BJ (cell line): ENCODE measurements at regions of chr1 and their contacts with region 1.

Region 1: GRCh38 chr1:214261206-214262123 is 19.5 kb upstream of the SMYD2 start:
- DNase-seq: peak; percentile 23
- H3K4me3 ChIP-seq: no peak overlapping the region
- H3K27me3 ChIP-seq: peaks cover 6% of the 10 kb centered on the region
- CTCF ChIP-seq: peak; percentile 99

Region 2: DNA sequence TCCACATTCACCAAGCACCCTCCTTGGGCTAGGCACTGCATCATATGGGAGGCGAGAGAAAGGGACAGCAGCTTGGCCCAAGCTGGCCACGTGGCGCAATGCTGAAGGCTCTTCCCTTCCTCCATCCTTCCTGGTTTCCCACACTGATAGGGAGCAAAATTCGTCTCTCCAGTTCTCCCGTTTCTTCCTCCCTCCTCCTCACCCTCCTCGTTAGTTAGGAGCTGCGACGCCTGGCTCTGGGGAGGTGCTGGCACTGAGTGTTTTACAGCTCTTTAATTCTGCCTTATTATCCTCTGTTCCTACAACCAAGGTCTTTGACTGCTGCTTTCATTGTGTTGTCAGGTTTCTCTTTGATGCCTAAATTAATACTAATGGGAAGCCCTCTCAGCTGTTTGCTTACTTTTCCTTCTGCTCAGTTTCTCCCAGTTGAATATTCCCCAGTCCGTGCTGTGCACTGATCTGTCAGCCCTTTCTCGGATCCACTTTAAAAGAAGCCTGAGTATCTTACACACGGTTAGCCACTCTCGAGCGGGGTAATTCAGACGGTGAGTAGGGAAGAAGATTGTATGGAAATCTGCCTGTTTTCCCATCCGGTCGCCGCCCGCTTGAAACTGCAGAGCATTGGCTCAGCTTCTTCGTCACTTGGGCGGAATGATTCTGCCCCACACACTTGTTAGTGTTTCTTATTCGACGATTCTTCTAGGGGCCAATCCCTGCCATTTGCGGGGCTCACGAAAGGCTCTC is 36.7 kb before region 1 on chr1:
- CTCF ChIA-PET with region 1: interaction called, 11 read pairs
- POLR2A ChIA-PET with region 1: no interaction called
- DNase-seq: no peak
- H3K4me3 ChIP-seq: peak overlapping the region; percentile 33
- H3K27me3 ChIP-seq: peaks cover 6% of the 10 kb centered on the region
- CTCF ChIP-seq: no peak

Region 3: GRCh38 chr1:214248311-214249085 is 13.0 kb before region 1 on chr1:
- CTCF ChIA-PET with region 1: interaction called, 31 read pairs
- POLR2A ChIA-PET with region 1: no interaction called
- DNase-seq: no peak
- H3K4me3 ChIP-seq: no peak overlapping the region
- H3K27me3 ChIP-seq: no peaks in the 10 kb centered on the region; the same call in 1 of the 2 replicates
- CTCF ChIP-seq: no peak

Region 4: GRCh38 chr1:214296860-214297745 is 35.6 kb after region 1 on chr1:
- CTCF ChIA-PET with region 1: interaction called, 19 read pairs
- POLR2A ChIA-PET with region 1: no interaction called
- DNase-seq: peak; percentile 80
- H3K4me3 ChIP-seq: no peak overlapping the region
- H3K27me3 ChIP-seq: no peaks in the 10 kb centered on the region
- CTCF ChIP-seq: no peak

Region 5: GRCh38 chr1:214321705-214322453 is 60.4 kb after region 1 on chr1:
- CTCF ChIA-PET with region 1: interaction called, 285 read pairs
- POLR2A ChIA-PET with region 1: interaction called, 7 read pairs
- DNase-seq: no peak
- H3K4me3 ChIP-seq: no peak overlapping the region
- H3K27me3 ChIP-seq: no peaks in the 10 kb centered on the region
- CTCF ChIP-seq: no peak